H1 (cell line): ENCODE measurements at regions of chr17 and their contacts with region 1.

Region 1: DNA sequence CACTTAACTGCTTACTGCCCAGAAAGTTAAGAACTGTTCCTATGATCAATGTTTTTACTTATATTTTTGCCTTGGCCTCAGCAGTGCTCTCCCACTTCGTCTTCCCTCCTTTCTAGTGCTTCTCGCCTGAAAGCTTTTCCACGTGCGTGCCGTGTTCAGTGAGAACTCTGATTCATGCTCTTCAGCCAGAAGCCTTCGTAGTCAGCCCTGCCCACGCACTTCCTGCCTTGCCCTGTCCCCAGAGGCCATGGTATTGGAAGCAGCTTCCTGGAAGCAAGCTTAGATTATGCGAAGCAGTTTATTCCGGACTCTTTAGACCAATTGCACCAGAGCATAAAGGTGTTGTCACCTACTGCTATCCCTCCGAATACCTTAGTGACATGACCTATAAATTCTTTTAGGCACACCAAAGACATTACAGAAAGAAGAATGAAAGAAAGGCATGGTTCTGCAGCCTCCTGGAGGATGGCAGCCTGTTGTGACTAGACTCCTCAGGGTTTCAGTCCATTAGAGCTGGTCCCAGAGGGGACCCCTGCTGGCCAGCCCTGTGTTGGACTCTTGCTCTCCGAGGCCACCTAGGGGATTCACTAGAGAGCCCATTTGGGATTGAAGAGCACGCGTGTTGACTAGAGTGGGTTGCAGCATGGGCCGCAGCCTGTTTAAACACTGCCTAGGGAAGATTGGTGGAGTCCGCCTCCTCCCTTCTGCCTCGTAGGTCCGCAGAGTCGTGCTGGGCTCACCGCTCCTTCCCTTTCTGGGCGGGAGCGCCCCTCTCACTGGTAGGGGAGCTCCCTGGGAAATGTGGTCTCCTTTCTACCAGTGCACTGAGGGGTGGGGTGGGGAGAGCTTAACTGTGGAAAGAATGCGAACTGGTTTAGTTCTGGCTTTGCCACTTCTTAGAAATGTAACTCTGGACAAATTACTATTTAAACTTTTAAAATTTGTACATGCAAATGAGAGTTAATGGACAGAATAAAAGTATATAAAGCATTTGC is 105.3 kb downstream of the RPTOR start:
- DNase-seq: peak; percentile 38 to 73
- H3K4me3 ChIP-seq: no peak overlapping the region
- H3K27ac ChIP-seq: no peak overlapping the region
- H3K4me1 ChIP-seq: peaks cover 3 to 10% (median 5%) of the 10 kb centered on the region in 4 experiments; a peak in 6 of 7 replicates
- H3K27me3 ChIP-seq: no peaks in the 10 kb centered on the region
- CTCF ChIP-seq: peak; percentile 68 to 99 (median 76)
- EP300 ChIP-seq: no peak
- POLR2A ChIP-seq: no peak
- RAD21 ChIP-seq: peak; percentile 52 to 71

Region 2: DNA sequence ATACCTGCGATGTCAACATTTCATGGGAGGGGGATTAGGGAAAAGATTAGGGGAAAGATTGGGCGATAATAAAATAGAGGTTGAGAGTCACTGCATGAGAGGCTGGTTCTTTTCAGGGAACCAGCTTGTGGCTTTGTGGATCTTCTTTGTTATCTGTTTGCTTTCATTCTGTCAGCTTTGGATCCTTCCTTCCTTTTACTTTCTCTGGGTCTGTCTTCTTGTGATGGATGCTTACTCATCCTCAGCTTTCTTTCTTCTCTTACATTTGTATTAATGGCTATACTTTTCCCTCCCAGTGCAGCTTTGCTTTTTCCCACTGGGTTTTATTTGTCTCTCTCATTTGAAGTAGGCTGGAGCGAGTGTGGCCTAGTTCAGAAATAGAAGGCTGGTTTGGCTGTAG is 58.2 kb before region 1 on chr17:
- CTCF ChIA-PET with region 1: interaction called, 11 read pairs
- POLR2A ChIA-PET with region 1: no interaction called
- DNase-seq: no peak
- H3K4me3 ChIP-seq: no peak overlapping the region
- H3K27ac ChIP-seq: no peak overlapping the region
- H3K4me1 ChIP-seq: peaks cover 0 to 2% (median 0%) of the 10 kb centered on the region in 4 experiments; a peak in 1 of 7 replicates
- H3K27me3 ChIP-seq: no peaks in the 10 kb centered on the region
- CTCF ChIP-seq: no peak
- EP300 ChIP-seq: no peak
- POLR2A ChIP-seq: no peak
- RAD21 ChIP-seq: no peak

Region 3: GRCh38 chr17:80629298-80630028 is 20.5 kb before region 1 on chr17:
- CTCF ChIA-PET with region 1: interaction called, 15 read pairs
- POLR2A ChIA-PET with region 1: interaction called, 3 read pairs
- DNase-seq: no peak
- H3K4me3 ChIP-seq: no peak overlapping the region
- H3K27ac ChIP-seq: no peak overlapping the region
- H3K4me1 ChIP-seq: peaks cover 0 to 10% (median 1%) of the 10 kb centered on the region in 4 experiments; a peak in 3 of 7 replicates
- H3K27me3 ChIP-seq: no peaks in the 10 kb centered on the region
- CTCF ChIP-seq: no peak
- EP300 ChIP-seq: no peak
- POLR2A ChIP-seq: no peak
- RAD21 ChIP-seq: no peak

Region 4: DNA sequence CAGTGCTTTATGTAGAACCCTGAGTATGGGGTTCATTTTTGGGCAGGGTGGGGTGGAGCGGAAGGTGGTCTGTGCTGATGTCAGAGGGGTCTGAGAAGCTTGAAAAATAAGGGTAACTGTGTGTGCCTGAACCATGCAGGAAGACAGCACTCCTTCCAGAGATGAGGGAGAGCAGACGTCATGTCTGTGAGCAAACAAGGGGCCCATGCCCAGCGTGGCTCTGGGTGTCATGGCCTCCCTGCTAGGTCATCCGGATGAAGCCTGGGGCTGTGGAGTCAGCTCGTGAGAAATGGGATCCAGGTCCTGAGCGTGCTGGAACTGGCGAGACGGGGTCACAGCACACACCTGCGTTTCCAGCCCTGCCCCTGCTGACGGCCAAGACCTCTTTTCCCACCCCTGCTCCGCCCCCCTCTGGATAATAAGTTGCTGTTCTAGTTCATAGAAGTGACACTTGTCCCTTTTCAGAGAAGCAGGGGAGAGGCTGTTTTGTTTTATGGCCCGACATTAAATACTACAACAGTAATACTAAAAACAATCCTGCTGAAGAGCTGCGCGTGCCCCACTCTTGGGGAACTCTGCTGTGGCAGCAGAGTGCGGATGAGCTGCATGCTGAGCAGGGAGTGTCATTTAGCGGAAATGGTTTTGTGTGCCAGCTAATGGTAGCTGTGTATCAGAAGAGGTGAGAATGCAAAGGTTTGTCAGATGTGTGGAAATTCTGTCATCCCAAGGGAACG is 12.8 kb before region 1 on chr17:
- CTCF ChIA-PET with region 1: interaction called, 30 read pairs
- POLR2A ChIA-PET with region 1: interaction called, 3 read pairs
- DNase-seq: no peak
- H3K4me3 ChIP-seq: no peak overlapping the region
- H3K27ac ChIP-seq: no peak overlapping the region
- H3K4me1 ChIP-seq: peaks cover 0 to under 1% (median under 1%) of the 10 kb centered on the region in 4 experiments; a peak in 2 of 7 replicates
- H3K27me3 ChIP-seq: no peaks in the 10 kb centered on the region
- CTCF ChIP-seq: no peak
- EP300 ChIP-seq: no peak
- POLR2A ChIP-seq: no peak
- RAD21 ChIP-seq: no peak

Region 5: GRCh38 chr17:80663781-80664206 is 13.8 kb after region 1 on chr17:
- CTCF ChIA-PET with region 1: interaction called, 14 read pairs
- POLR2A ChIA-PET with region 1: interaction called, 3 read pairs
- DNase-seq: no peak
- H3K4me3 ChIP-seq: no peak overlapping the region
- H3K27ac ChIP-seq: no peak overlapping the region
- H3K4me1 ChIP-seq: peaks cover 0 to 11% (median 6%) of the 10 kb centered on the region in 4 experiments; a peak in 4 of 7 replicates
- H3K27me3 ChIP-seq: no peaks in the 10 kb centered on the region
- CTCF ChIP-seq: no peak
- EP300 ChIP-seq: no peak
- POLR2A ChIP-seq: no peak
- RAD21 ChIP-seq: no peak